Right cardiac atrium (tissue), 5 donors: ENCODE measurements at regions of chr1 and their contacts with region 1.

Region 1: GRCh38 chr1:43238085-43238484 is 31.7 kb upstream of the TMEM125 start:
- DNase-seq: peak; percentile 72 to 83 (median 78)
- ATAC-seq: peak; percentile 83 to 86
- H3K4me3 ChIP-seq: no peak overlapping the region
- H3K27ac ChIP-seq: peak overlapping the region; percentile 7
- H3K4me1 ChIP-seq: peaks cover 8% of the 10 kb centered on the region
- H3K27me3 ChIP-seq: no peaks in the 10 kb centered on the region

Region 2: DNA sequence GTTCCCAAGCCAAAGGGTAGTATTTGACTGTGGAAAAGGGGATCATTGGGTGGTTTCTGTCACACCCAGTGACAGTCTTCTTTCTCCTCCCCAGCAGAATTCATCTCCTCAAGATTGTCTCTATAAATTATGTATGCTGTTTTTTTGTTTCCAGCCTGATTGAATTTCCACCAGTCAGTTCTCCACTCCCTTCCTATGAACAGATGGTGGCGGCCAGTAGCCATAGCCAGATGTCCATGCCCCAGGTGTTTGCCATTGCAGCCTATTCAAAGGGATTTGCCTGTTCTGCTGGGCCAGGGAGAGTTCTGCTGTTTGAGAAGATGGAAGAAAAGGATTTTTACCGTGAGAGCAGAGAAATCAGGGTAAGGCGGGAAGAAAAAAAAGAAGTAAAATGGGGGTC is 53.1 kb before region 1 on chr1:
- intact Hi-C with region 1: no loop called
- DNase-seq: no peak
- ATAC-seq: no peak
- H3K4me3 ChIP-seq: no peak overlapping the region
- H3K27ac ChIP-seq: no peak overlapping the region
- H3K4me1 ChIP-seq: no peaks in the 10 kb centered on the region
- H3K27me3 ChIP-seq: no peaks in the 10 kb centered on the region

Region 3: DNA sequence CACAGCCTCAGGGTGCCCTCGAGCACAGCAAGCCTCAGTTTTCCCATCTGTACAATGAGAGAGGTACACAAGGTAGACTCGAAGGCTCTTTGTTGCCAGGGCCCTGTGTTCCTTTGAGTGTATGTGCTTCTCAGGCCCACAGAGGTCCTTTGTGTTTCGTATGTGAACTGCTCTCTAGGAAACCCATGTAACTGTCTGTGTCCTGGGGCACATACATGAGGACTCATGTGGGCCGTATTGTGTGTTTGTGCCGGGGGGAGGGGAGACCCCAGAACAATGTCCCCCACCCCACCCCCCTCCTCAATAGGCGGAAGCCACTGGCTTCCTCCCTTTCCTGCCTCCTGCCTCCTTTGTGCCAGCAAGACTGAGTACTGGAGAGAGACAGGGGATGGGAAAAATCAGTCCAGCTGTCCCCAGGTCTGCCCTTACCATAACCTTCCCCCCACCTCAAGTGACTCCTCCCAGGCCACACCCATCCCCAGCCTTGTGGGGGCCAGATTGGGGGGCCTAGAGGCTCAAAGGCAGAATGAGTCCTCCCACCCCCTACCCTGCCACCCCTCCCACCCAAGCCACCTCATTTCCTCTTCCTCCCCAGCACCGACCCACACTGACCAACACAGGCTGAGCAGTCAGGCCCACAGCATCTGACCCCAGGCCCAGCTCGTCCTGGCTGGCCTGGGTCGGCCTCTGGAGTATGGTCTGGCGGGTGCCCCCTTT is 62.5 kb after region 1 on chr1 and contains the start of gene TIE1:
- intact Hi-C with region 1: loop called in 1 of 4 experiments (anchors 5 kb)
- DNase-seq: peak; percentile 57 to 76 (median 64)
- ATAC-seq: peak; percentile 72 to 86
- H3K4me3 ChIP-seq: peak within 1 kb of the TSS; percentile 45
- H3K27ac ChIP-seq: peak within 1 kb of the TSS; percentile 74
- H3K4me1 ChIP-seq: peaks cover 21% of the 10 kb centered on the region
- H3K27me3 ChIP-seq: no peaks in the 10 kb centered on the region
- total RNA-seq, gene TIE1: 21.7 to 49.4 (median 44.4) TPM

Region 4: DNA sequence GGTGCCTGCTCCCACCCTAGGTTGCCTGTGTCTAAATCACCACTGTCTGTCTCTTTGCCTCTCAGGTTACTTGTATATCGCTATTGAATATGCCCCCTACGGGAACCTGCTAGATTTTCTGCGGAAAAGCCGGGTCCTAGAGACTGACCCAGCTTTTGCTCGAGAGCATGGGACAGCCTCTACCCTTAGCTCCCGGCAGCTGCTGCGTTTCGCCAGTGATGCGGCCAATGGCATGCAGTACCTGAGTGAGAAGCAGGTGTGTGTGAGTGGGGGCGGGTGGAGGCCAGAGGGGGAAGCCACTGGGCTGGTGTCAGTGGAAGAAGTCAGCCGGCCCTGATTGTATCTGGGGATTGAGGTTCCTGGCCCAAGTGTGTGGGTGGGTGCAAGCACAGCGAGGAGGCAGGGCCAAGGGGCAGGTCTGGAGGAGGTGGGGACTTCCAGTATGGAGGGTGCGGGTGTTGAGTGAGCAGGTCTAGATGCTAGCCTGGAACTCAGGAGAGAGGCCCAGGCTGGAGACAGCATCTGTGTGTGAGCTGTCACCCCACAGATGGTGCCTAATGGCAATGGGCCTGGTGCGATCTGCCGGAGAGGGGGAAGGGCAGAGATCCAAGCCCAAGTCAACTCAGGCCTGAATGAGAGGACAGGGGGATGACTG is 79.9 kb after region 1 on chr1:
- intact Hi-C with region 1: no loop called
- DNase-seq: no peak
- ATAC-seq: peak; percentile 3 to 14
- H3K4me3 ChIP-seq: no peak overlapping the region
- H3K27ac ChIP-seq: no peak overlapping the region
- H3K4me1 ChIP-seq: peaks cover 3% of the 10 kb centered on the region
- H3K27me3 ChIP-seq: no peaks in the 10 kb centered on the region

Region 5: GRCh38 chr1:43348809-43349583 is 110.9 kb after region 1 on chr1:
- intact Hi-C with region 1: loop called in 1 of 4 experiments (anchors 2 kb)
- DNase-seq: peak; percentile 82 to 94 (median 93)
- ATAC-seq: peak; percentile 88 to 92
- H3K4me3 ChIP-seq: peak overlapping the region; percentile 45
- H3K27ac ChIP-seq: peak overlapping the region; percentile 91
- H3K4me1 ChIP-seq: peaks cover 1% of the 10 kb centered on the region
- H3K27me3 ChIP-seq: no peaks in the 10 kb centered on the region

Region 6: GRCh38 chr1:43383449-43383848 is 145.4 kb after region 1 on chr1:
- intact Hi-C with region 1: loop called (anchors 5 to 10 kb)
- DNase-seq: no peak
- ATAC-seq: peak; percentile 6 to 10
- H3K4me3 ChIP-seq: no peak overlapping the region
- H3K27ac ChIP-seq: no peak overlapping the region
- H3K4me1 ChIP-seq: peaks cover 17% of the 10 kb centered on the region
- H3K27me3 ChIP-seq: no peaks in the 10 kb centered on the region

Region 7: GRCh38 chr1:43389326-43390313 is 151.5 kb after region 1 on chr1 and contains the starts of genes MED8 and SZT2:
- intact Hi-C with region 1: loop called (anchors 5 to 10 kb)
- DNase-seq: peak; percentile 95 to 98 (median 97)
- ATAC-seq: peak; percentile 98
- H3K4me3 ChIP-seq: peak within 1 kb of the TSS; percentile 84
- H3K27ac ChIP-seq: peak within 1 kb of the TSS; percentile 76
- H3K4me1 ChIP-seq: peaks cover 10% of the 10 kb centered on the region
- H3K27me3 ChIP-seq: no peaks in the 10 kb centered on the region
- total RNA-seq, gene MED8: 16.8 to 22.1 (median 18.9) TPM
- total RNA-seq, gene SZT2: 31.2 to 36.4 (median 33.4) TPM

Region 8: GRCh38 chr1:43414634-43415223 is 176.6 kb after region 1 on chr1:
- intact Hi-C with region 1: loop called in 2 of 4 experiments (anchors 5 to 10 kb)
- DNase-seq: peak in 2 of 3 donors; percentile 49 to 56
- ATAC-seq: peak; percentile 73 to 83
- H3K4me3 ChIP-seq: no peak overlapping the region
- H3K27ac ChIP-seq: no peak overlapping the region
- H3K4me1 ChIP-seq: no peaks in the 10 kb centered on the region
- H3K27me3 ChIP-seq: no peaks in the 10 kb centered on the region

Region 9: GRCh38 chr1:43554444-43554992 is 316.4 kb after region 1 on chr1:
- intact Hi-C with region 1: no loop called
- DNase-seq: no peak
- ATAC-seq: no peak
- H3K4me3 ChIP-seq: no peak overlapping the region
- H3K27ac ChIP-seq: no peak overlapping the region
- H3K4me1 ChIP-seq: no peaks in the 10 kb centered on the region
- H3K27me3 ChIP-seq: no peaks in the 10 kb centered on the region

Region 10: GRCh38 chr1:43844114-43844513 is 606.0 kb after region 1 on chr1:
- intact Hi-C with region 1: no loop called
- DNase-seq: no peak
- ATAC-seq: no peak
- H3K4me3 ChIP-seq: no peak overlapping the region
- H3K27ac ChIP-seq: no peak overlapping the region
- H3K4me1 ChIP-seq: no peaks in the 10 kb centered on the region
- H3K27me3 ChIP-seq: no peaks in the 10 kb centered on the region